ENCODE measurements at regions of chr4 and their contacts with region 1.

Region 1: GRCh38 chr4:101790521-101791188 is at the start of gene BANK1:
- DNase-seq: peak; percentile 86
- ATAC-seq: peak; percentile 89
- H3K4me3 Mint-ChIP-seq: peak within 1 kb of the TSS; percentile 97
- H3K27ac Mint-ChIP-seq: peak within 1 kb of the TSS; percentile 99
- H3K4me1 Mint-ChIP-seq: peaks cover 66% of the 10 kb centered on the region
- H3K27me3 Mint-ChIP-seq: no peaks in the 10 kb centered on the region
- CTCF ChIP-seq: peak; percentile 37
- total RNA-seq, gene BANK1: 307 and 336 TPM in 2 replicates

Region 2: GRCh38 chr4:101169044-101170014 is 621.3 kb before region 1 on chr4:
- CTCF ChIA-PET with region 1: interaction called, 3 read pairs
- POLR2A ChIA-PET with region 1: interaction called, 7 read pairs
- intact Hi-C with region 1: loop called (anchors 1 kb)
- DNase-seq: no peak
- ATAC-seq: peak; percentile 99
- H3K4me3 Mint-ChIP-seq: no peak overlapping the region
- H3K27ac Mint-ChIP-seq: no peak overlapping the region
- H3K4me1 Mint-ChIP-seq: peaks cover 21% of the 10 kb centered on the region
- H3K27me3 Mint-ChIP-seq: no peaks in the 10 kb centered on the region
- CTCF ChIP-seq: no peak

Region 3: DNA sequence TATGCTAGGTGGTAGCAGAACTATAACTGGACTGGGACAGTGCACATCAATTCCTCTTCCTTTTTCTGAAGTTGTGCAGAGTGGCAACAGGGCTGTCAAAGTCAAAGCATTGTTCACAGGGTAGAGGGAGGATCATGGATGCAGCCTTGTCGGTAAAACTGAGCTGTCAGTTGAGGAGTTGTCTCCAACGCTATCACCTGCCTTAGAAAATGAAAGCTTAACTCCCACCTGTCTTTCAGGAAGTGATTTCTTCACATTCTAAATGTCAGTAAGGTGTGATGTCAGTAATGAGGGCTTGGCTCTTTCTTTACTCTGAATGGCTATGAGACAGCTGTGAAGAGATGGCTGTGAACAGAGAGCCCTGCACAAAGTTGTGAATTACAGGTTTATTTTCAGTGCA is 66.6 kb before region 1 on chr4:
- CTCF ChIA-PET with region 1: no interaction called
- POLR2A ChIA-PET with region 1: no interaction called
- intact Hi-C with region 1: no loop called
- DNase-seq: no peak
- ATAC-seq: peak; percentile 47
- H3K4me3 Mint-ChIP-seq: peak overlapping the region; percentile 20
- H3K27ac Mint-ChIP-seq: peak overlapping the region; percentile 36
- H3K4me1 Mint-ChIP-seq: peaks cover 22% of the 10 kb centered on the region
- H3K27me3 Mint-ChIP-seq: no peaks in the 10 kb centered on the region
- CTCF ChIP-seq: no peak

Region 4: GRCh38 chr4:101806914-101807313 is 16.3 kb after region 1 on chr4:
- CTCF ChIA-PET with region 1: interaction called, 4 read pairs
- POLR2A ChIA-PET with region 1: interaction called, 188 read pairs
- intact Hi-C with region 1: loop called (anchors 1 kb)
- DNase-seq: no peak
- ATAC-seq: peak; percentile 87
- H3K4me3 Mint-ChIP-seq: peak overlapping the region; percentile 73
- H3K27ac Mint-ChIP-seq: peak overlapping the region; percentile 95
- H3K4me1 Mint-ChIP-seq: peaks cover 83% of the 10 kb centered on the region
- H3K27me3 Mint-ChIP-seq: no peaks in the 10 kb centered on the region
- CTCF ChIP-seq: no peak

Region 5: DNA sequence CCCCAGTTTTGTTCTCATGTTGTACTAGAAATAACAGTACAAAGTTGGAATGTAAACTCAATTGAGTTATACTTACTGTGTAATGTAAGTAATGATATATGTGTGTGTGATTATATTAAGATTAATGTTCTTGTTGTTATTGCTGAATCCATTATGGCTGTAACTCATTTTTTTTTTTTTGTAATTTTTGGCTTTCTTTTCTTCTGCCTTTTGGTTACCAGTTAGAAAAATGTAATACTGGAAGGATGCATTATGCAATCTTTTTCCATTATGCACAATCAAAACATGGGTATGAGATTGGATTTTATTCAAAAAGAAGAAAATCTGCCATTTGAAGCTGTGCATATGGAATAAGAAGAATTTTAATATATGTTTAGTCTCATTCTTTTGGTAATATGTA is 33.8 kb after region 1 on chr4:
- CTCF ChIA-PET with region 1: no interaction called
- POLR2A ChIA-PET with region 1: interaction called, 4 read pairs
- intact Hi-C with region 1: loop called (anchors 5 kb)
- DNase-seq: no peak
- ATAC-seq: no peak
- H3K4me3 Mint-ChIP-seq: peak overlapping the region; percentile 21
- H3K27ac Mint-ChIP-seq: peak overlapping the region; percentile 72
- H3K4me1 Mint-ChIP-seq: peaks cover 78% of the 10 kb centered on the region
- H3K27me3 Mint-ChIP-seq: no peaks in the 10 kb centered on the region
- CTCF ChIP-seq: no peak

Region 6: DNA sequence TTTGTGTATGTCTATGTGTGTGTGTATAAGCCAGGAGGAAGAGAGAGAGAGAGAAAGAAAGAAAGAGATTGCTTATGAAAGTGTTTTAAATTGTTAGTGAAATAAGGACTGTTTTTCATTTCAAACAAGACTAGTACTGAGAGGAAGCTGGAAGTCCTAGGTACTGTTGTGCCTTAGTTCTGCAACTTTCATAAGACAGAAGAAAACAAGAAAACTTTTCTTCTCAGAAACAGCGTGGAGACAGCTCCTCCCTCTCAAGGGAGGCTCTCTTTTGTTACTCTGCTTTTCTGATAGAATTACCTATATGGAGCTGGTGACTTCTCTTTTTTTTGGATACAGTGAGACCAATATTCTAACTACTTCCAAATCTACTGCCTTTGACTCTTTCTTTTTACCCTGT is 62.4 kb after region 1 on chr4:
- CTCF ChIA-PET with region 1: interaction called, 5 read pairs
- POLR2A ChIA-PET with region 1: interaction called, 10 read pairs
- intact Hi-C with region 1: loop called (anchors 2 kb)
- DNase-seq: no peak
- ATAC-seq: peak; percentile 25
- H3K4me3 Mint-ChIP-seq: peak overlapping the region; percentile 69
- H3K27ac Mint-ChIP-seq: peak overlapping the region; percentile 94
- H3K4me1 Mint-ChIP-seq: peaks cover 91% of the 10 kb centered on the region
- H3K27me3 Mint-ChIP-seq: no peaks in the 10 kb centered on the region
- CTCF ChIP-seq: no peak

Region 7: DNA sequence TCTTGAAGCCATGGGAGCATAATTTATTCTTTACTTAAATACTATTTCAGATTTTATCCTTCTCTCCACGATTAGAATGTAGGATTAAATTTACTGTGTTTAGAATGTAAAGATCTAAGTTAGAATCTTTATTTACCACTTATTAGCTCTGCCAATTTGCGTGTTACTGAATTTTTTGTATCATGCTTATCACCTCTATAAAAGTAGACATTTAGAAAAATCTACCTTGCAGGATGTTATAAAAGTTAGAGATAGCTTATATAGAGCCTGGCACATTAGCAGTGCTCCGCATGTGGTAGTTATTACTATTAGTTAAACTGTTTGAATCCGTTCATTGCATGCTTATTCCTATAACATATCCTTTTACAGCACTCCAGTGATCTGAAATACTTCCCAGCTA is 97.8 kb after region 1 on chr4:
- CTCF ChIA-PET with region 1: no interaction called
- POLR2A ChIA-PET with region 1: no interaction called
- intact Hi-C with region 1: no loop called
- DNase-seq: no peak
- ATAC-seq: no peak
- H3K4me3 Mint-ChIP-seq: no peak overlapping the region
- H3K27ac Mint-ChIP-seq: no peak overlapping the region
- H3K4me1 Mint-ChIP-seq: peaks cover 24% of the 10 kb centered on the region
- H3K27me3 Mint-ChIP-seq: no peaks in the 10 kb centered on the region
- CTCF ChIP-seq: no peak

Region 8: GRCh38 chr4:102007959-102008425 is 217.3 kb after region 1 on chr4:
- CTCF ChIA-PET with region 1: no interaction called
- POLR2A ChIA-PET with region 1: interaction called, 3 read pairs
- intact Hi-C with region 1: loop called (anchors 2 kb)
- DNase-seq: no peak
- ATAC-seq: peak; percentile 92
- H3K4me3 Mint-ChIP-seq: peak overlapping the region; percentile 38
- H3K27ac Mint-ChIP-seq: peak overlapping the region; percentile 57
- H3K4me1 Mint-ChIP-seq: peaks cover 59% of the 10 kb centered on the region
- H3K27me3 Mint-ChIP-seq: no peaks in the 10 kb centered on the region
- CTCF ChIP-seq: no peak

Region 9: GRCh38 chr4:102344954-102345794 is 554.5 kb after region 1 on chr4 and contains the start of gene SLC39A8:
- CTCF ChIA-PET with region 1: no interaction called
- POLR2A ChIA-PET with region 1: interaction called, 3 read pairs
- intact Hi-C with region 1: loop called (anchors 10 kb)
- DNase-seq: peak; percentile 82
- ATAC-seq: peak; percentile 87
- H3K4me3 Mint-ChIP-seq: peak within 1 kb of the TSS; percentile 89
- H3K27ac Mint-ChIP-seq: peak within 1 kb of the TSS; percentile 93
- H3K4me1 Mint-ChIP-seq: peaks cover 34% of the 10 kb centered on the region
- H3K27me3 Mint-ChIP-seq: no peaks in the 10 kb centered on the region
- CTCF ChIP-seq: no peak
- total RNA-seq, gene SLC39A8: 17.9 and 18.1 TPM in 2 replicates

Region 10: GRCh38 chr4:102390438-102390837 is 599.8 kb after region 1 on chr4:
- CTCF ChIA-PET with region 1: no interaction called
- POLR2A ChIA-PET with region 1: no interaction called
- intact Hi-C with region 1: no loop called
- DNase-seq: no peak
- ATAC-seq: peak; percentile 91
- H3K4me3 Mint-ChIP-seq: no peak overlapping the region
- H3K27ac Mint-ChIP-seq: no peak overlapping the region
- H3K4me1 Mint-ChIP-seq: peaks cover 13% of the 10 kb centered on the region
- H3K27me3 Mint-ChIP-seq: peaks cover 12% of the 10 kb centered on the region
- CTCF ChIP-seq: no peak